Activated CD4-positive, alpha-beta T cell treated with anti-CD3 and anti-CD28 coated beads for 36 hours (primary cell): ENCODE measurements at regions of chr15 and their contacts with region 1.

Region 1: DNA sequence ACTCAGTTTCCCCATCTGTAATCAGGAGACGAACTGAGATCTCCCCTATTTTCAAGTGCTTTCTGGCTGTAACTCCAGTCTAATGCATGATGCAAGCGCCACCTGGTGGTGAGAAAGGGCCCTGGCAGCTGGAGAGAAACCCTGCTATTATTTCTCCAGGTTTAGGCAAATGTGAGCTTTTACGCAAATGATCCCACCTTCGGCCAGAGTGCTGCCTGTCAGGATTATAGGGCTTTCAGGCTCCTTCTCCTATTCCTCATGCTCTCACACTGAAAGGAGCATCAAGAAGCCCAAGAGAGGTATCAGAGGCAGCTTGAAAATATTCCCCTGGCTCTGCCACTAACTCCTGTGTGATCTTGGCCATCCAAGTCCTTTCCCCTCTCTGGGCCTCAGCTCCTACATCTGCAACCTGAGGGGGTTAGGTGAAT is 93.9 kb upstream of the RASGRF1 start:
- DNase-seq: peak; percentile 83
- ATAC-seq: no peak
- H3K4me3 Mint-ChIP-seq: no peak overlapping the region
- H3K27ac Mint-ChIP-seq: no peak overlapping the region
- H3K4me1 Mint-ChIP-seq: no peaks in the 10 kb centered on the region
- H3K27me3 Mint-ChIP-seq: peaks cover 4% of the 10 kb centered on the region

Region 2: DNA sequence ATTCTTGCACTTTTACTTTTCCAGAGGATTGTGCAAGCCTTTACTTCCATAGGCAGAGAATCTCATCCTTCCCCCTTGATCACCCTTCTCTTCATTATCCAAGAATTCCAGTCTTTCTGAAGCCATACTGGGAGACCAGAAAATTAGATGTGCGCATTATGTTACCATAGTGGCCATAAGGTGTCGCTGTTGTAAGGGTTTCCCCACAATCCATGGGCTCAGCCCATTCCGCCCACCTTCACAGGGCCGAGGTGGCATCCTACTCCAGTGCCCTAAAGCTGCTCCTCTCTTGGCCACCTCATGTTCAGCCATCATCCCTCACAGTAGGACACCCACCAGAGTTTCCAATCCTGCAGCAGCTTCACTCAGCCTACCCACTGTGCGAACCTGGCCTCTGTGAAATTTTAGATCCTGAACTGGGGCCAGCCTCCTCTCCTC is 274.7 kb before region 1 on chr15:
- CTCF ChIA-PET with region 1: interaction called, 5 read pairs
- POLR2A ChIA-PET with region 1: no interaction called
- intact Hi-C with region 1: loop called (anchors 5 kb)
- DNase-seq: peak; percentile 53
- ATAC-seq: peak; percentile 69
- H3K4me3 Mint-ChIP-seq: no peak overlapping the region
- H3K27ac Mint-ChIP-seq: peak overlapping the region; percentile 26
- H3K4me1 Mint-ChIP-seq: peaks cover 8% of the 10 kb centered on the region
- H3K27me3 Mint-ChIP-seq: no peaks in the 10 kb centered on the region

Region 3: DNA sequence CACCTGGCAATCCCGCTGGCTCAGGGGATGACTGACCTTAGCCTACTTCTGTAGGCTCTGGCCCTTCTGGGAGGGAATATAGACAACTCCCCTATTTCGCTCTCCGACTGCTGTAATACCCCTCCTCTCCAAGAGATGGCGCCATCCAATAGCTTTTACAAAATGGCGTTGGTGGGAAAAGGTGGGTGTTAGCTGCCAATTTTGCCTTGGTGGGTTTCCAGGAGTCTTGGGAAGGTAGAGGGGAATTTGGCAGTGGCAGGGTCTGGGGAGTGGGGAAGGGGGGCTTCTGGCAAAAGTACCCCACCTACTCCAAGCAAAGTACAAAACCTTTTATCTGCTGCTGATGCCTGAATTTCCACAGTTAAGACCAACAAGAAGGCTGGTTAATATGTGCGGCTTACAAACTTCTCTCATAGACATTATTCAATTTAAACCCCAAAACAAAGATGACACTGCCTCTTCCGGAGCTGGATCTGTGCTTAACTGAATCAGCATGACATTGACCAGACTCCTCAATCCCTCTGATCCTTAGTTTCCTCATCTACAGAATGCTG is 156.0 kb before region 1 on chr15:
- CTCF ChIA-PET with region 1: interaction called, 99 read pairs
- POLR2A ChIA-PET with region 1: no interaction called
- intact Hi-C with region 1: loop called (anchors 1 kb)
- DNase-seq: peak; percentile 61
- ATAC-seq: no peak
- H3K4me3 Mint-ChIP-seq: no peak overlapping the region
- H3K27ac Mint-ChIP-seq: no peak overlapping the region
- H3K4me1 Mint-ChIP-seq: no peaks in the 10 kb centered on the region
- H3K27me3 Mint-ChIP-seq: peaks cover 5% of the 10 kb centered on the region

Region 4: GRCh38 chr15:79046696-79047404 is 137.6 kb before region 1 on chr15:
- CTCF ChIA-PET with region 1: interaction called, 15 read pairs
- POLR2A ChIA-PET with region 1: no interaction called
- intact Hi-C with region 1: no loop called
- DNase-seq: no peak
- ATAC-seq: no peak
- H3K4me3 Mint-ChIP-seq: no peak overlapping the region
- H3K27ac Mint-ChIP-seq: no peak overlapping the region
- H3K4me1 Mint-ChIP-seq: no peaks in the 10 kb centered on the region
- H3K27me3 Mint-ChIP-seq: peaks cover 4% of the 10 kb centered on the region

Region 5: DNA sequence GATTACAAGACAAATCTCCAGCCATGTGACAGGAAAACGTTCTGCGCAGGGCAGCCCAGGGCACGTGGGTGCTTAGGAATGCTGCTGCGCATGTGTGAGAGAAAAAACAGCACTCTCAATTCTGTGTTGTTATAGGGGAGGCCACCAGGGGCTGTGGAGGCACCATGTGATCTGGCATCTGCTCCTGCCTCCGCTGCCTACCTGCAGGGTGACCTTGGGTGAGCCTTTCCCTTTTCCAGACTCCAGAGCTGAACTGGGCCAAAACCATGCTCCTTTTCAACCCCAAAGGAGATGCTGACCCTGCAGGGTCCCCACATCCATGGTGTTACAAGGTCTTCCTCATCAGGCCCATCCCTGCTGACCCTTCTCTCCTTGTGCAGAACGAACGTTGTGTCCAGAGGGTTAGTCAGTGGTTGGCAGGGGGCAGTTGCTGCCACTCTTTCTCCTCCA is 12.4 kb before region 1 on chr15:
- CTCF ChIA-PET with region 1: interaction called, 33 read pairs
- POLR2A ChIA-PET with region 1: no interaction called
- intact Hi-C with region 1: no loop called
- DNase-seq: no peak
- ATAC-seq: no peak
- H3K4me3 Mint-ChIP-seq: no peak overlapping the region
- H3K27ac Mint-ChIP-seq: no peak overlapping the region
- H3K4me1 Mint-ChIP-seq: no peaks in the 10 kb centered on the region
- H3K27me3 Mint-ChIP-seq: peaks cover 17% of the 10 kb centered on the region